ENCODE measurements at regions of chr14 and their contacts with region 1.

Region 1: GRCh38 chr14:22472935-22473854 is 115.8 kb downstream of the DAD1 start:
- DNase-seq: peak in 2 of 4 donors; percentile 49 to 75
- ATAC-seq: peak; percentile 69
- H3K4me3 ChIP-seq: no peak overlapping the region
- H3K27ac ChIP-seq: no peak overlapping the region
- H3K4me1 ChIP-seq: no peaks in the 10 kb centered on the region
- H3K27me3 ChIP-seq: no peaks in the 10 kb centered on the region
- CTCF ChIP-seq: peak; percentile 45 to 48

Region 2: DNA sequence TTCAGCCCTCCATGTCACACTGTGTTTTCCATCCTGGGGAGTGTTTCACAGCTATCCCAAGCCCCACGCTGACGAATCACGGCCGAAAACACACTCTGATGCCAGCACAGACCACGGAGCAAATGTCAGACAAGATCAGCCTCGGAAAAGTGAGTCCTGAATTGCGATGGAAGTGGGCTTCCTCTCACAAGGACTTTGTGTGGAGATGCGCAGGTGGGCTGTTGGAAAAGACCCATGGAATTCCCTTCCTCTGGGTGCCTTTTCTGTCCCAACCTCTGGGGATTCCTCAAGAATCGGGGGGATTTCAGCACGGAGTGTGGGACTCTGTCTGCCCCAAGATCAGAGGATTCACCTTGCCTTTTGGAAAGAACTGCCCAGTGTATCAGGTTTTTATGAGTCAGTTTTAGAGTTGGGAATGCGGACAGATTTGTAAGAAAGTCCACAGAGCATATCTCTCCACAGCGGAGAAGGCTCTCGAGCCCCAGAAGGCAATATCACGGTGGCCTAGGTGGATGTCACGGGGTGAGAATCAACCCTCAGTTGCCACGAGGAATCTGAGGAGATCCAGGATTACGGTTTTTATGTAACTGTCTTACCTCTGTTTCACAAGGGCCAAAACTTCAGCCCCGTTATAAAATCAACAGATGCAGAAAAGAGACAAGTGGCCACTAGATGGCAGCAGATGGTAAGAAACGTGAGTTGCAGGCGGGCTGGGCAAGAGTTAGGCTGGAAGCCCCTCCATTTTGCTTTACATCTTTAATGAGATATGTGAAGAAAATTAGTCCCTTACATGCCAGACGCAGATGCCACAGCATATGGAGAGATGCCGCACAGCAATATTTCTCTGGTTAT is 86.0 kb before region 1 on chr14:
- intact Hi-C with region 1: loop called (anchors 5 kb)
- DNase-seq: peak in 3 of 4 donors; percentile 53 to 88 (median 81)
- ATAC-seq: peak; percentile 57
- H3K4me3 ChIP-seq: no peak overlapping the region
- H3K27ac ChIP-seq: no peak overlapping the region
- H3K4me1 ChIP-seq: peaks cover 0 to 5% of the 10 kb centered on the region in 2 donors
- H3K27me3 ChIP-seq: peaks cover 0 to 7% of the 10 kb centered on the region in 2 donors
- CTCF ChIP-seq: peak; percentile 78

Measured in left lung (tissue), 14 donors.